ENCODE measurements at regions of chr16 and their contacts with region 1.

Region 1: DNA sequence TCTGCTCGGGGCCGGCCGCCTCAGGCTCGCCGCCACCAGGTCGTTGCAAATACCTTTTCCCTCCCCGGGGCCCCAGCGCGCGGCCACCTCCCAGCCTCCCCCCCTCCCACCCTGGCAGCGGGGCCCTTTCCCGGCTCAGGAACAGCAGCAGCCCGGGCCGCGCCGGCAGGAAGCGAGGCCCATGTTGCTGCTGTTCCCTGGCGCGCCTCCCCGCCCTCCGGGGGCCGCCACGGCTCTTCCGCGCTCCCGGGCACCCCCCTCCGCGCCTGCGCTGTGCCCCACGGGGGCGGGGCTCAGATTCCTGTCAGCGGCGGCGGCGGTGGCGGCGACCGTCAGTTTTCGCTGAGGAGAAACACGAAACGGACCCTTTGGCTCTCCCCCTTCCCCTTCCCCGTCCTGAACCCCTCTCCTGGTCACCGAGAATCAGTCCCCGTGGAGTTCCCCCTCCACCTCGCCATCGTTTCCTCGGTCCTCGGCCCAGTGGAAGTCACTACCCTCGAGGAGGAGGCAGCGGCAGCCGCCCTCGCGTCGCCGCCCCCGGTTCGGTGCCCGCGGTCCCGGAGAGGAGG is at the start of gene NFAT5:
- DNase-seq: peak; percentile 73 to 89
- ATAC-seq: peak; percentile 81
- total RNA-seq, gene NFAT5: 30.2 to 34.9 TPM

Region 2: DNA sequence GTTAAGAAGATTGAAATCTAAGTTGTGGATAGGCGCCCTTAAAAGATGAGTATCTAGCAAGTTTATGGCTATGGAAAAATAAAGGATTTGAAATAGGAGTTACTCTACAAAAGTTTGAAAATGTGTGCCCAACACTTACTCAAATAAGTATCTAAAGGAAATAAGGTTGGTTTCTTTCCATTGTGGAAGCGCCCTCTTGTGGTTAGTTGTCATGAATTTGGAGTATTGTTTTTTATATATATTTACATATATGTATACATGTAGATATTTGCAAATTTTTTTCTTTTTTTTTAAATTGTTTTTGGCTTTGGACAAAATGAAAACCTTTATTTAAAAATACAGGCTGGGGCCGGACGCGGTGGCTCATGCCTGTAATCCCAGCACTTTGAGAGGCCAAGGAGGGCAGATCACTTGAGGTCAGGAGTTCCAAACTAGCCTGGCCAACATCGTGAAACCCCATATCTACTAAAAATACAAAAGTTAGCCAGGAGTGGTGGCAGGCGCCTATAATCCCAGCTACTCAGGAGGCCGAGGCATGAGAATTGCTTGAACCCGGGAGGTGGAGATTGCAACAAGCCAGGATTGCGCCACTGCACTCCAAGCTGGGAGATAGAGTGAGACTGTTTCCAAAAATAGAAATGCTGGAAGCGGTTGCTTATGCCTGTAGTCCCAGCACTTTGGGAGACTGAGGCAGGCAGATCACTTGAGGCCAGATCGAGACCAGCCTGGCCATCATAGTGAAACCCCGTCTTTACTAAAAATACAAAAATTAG is 278.6 kb before region 1 on chr16:
- intact Hi-C with region 1: no loop called
- DNase-seq: peak in 1 of 2 donors; percentile 26
- ATAC-seq: peak; percentile 61

Region 3: GRCh38 chr16:69396187-69397061 is 169.3 kb before region 1 on chr16:
- intact Hi-C with region 1: loop called in 1 of 2 experiments (anchors 10 kb)
- DNase-seq: peak; percentile 69 to 77
- ATAC-seq: peak; percentile 86

Region 4: DNA sequence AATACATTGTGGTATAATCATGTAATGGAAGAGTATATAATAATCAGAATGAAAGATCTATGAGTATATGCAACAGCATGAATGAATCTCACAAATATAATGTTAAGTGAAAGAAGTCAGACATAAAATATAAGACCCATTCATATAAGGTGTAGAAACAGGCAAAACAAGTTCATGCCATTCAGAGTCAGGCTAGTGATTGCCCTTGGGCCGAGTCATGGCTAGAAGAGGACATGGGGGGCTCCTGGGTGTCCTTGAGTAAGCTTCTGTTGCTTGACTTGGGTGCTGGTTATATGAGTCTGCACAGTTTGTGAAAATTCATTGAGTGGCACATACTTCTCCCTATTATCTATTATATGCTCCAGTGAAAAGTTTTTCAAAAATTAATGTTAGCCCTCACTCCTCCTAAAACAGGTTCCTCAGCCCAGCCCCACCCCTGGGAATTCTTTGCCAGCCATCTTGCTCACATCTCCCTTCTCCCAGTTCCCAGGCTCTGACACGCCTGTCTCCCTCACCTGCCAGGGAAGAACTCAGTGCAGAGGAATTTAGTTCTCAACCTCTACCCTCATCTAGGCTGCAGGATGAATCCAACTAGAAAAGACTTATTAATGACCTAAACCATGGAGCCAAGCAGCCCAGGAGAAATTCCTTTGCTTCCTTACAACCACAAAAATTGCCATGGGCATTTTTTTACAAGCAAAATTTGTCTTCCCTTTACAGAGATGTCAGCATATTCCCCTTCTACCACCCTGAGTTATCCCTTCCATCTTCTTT is 52.4 kb before region 1 on chr16:
- intact Hi-C with region 1: no loop called
- DNase-seq: no peak
- ATAC-seq: no peak